ENCODE measurements at regions of chr17 and their contacts with region 1.

Region 1: DNA sequence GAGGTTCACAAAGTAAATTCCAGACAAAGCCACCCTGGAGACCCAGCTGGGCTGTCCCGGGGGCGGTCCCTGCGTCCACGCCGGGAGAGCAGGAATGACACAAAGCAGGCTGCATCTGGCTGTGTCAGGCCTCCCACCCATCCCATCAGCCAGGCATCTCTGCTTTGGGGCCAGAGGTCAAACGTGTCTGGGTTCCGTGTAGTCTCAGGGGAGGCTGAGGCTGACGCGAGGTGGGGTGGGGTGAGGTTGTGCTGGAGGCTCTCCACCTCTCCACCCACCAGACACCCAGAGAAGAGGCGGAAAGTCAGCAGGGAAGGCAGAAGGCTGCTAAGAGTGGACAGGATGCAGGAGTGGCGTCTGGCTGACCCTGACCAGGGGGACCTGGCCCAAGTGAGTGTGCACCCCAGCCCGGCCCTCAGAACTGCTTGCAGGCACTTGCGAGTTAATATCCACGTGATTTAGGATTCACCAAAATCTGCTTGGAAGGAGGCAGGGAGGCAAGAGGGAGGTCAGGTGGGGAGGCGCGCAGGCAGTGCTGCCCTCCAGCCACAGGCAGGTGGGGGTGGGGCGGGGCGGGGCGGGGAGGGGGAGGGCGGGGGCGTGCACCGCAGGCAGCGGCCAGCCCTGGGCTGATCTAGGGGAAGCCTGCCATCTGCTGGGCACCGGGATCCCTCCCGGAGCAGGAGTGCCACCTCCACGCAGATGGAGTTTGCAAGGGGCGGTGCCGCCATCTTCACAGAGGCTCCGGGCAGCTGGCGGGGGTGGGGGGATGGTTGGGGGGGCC is 44.3 kb downstream of the TBC1D16 start:
- DNase-seq: peak; percentile 75
- H3K4me3 Mint-ChIP-seq: no peak overlapping the region
- H3K27ac Mint-ChIP-seq: no peak overlapping the region
- H3K4me1 Mint-ChIP-seq: peaks cover 35% of the 10 kb centered on the region
- H3K27me3 Mint-ChIP-seq: no peaks in the 10 kb centered on the region
- CTCF ChIP-seq: peak; percentile 73

Region 2: DNA sequence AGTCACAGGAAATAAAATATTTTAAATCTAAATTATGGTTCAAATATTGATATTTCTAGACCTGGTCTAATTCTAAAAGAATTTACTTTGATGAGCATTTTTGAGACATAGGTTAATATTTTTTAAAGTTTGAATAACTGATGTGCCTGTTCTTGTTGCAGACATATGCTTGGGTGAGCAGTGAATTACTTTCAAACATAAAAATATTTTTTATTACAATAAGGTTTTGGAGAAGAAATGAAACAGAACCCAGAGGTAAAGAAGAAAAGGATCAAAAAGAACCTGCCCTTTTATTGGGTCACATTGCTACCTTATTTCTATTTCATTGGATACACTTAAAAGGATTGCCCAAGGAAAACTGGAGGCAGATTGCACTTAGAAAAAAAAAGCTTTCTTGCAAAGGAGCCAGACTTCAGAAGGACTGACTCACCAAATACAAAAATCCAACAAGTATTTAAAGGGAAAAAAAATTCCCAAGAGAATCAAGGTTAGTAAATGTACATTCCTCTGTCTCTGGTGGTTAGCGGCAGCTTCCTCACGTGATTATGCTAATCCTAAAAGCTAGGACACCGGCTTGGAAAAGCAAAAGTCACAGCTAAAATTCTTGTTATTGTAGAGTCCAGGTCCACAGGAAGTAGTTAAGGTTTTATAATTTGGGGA is 242.0 kb before region 1 on chr17:
- CTCF ChIA-PET with region 1: interaction called, 8 read pairs
- POLR2A ChIA-PET with region 1: interaction called, 7 read pairs
- intact Hi-C with region 1: loop called (anchors 1 kb)
- DNase-seq: peak; percentile 57
- H3K4me3 Mint-ChIP-seq: no peak overlapping the region
- H3K27ac Mint-ChIP-seq: no peak overlapping the region
- H3K4me1 Mint-ChIP-seq: no peaks in the 10 kb centered on the region
- H3K27me3 Mint-ChIP-seq: no peaks in the 10 kb centered on the region
- CTCF ChIP-seq: no peak

Region 3: GRCh38 chr17:79810130-79811010 is 181.0 kb before region 1 on chr17:
- CTCF ChIA-PET with region 1: interaction called, 19 read pairs
- POLR2A ChIA-PET with region 1: interaction called, 5 read pairs
- intact Hi-C with region 1: loop called (anchors 1 kb)
- DNase-seq: peak; percentile 84
- H3K4me3 Mint-ChIP-seq: peak overlapping the region; percentile 33
- H3K27ac Mint-ChIP-seq: no peak overlapping the region
- H3K4me1 Mint-ChIP-seq: peaks cover 12% of the 10 kb centered on the region
- H3K27me3 Mint-ChIP-seq: peaks cover 46% of the 10 kb centered on the region
- CTCF ChIP-seq: no peak

Region 4: DNA sequence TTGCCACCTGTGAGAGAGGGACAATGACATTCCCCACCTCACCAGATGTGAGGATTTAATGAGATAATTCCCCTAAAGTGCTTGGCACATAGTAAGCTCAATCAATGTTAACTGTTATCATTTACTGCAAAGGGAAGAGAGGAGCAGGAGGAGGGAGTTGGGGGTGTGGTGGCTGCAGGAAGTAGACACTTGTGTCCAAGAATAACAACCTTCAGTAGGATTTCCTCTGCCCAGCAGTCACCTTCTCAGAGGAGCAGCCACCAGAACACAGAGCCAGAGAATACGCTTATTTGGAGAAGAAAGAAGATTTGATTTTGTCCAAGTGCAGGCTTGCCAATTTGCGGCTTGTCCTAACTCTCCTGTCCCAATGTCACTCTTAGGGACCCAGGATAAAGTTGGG is 162.3 kb before region 1 on chr17:
- CTCF ChIA-PET with region 1: no interaction called
- POLR2A ChIA-PET with region 1: no interaction called
- intact Hi-C with region 1: no loop called
- DNase-seq: no peak
- H3K4me3 Mint-ChIP-seq: no peak overlapping the region
- H3K27ac Mint-ChIP-seq: no peak overlapping the region
- H3K4me1 Mint-ChIP-seq: peaks cover 15% of the 10 kb centered on the region
- H3K27me3 Mint-ChIP-seq: no peaks in the 10 kb centered on the region
- CTCF ChIP-seq: no peak

Region 5: GRCh38 chr17:79915850-79916430 is 75.4 kb before region 1 on chr17:
- CTCF ChIA-PET with region 1: interaction called, 11 read pairs
- POLR2A ChIA-PET with region 1: interaction called, 8 read pairs
- intact Hi-C with region 1: loop called (anchors 1 kb)
- DNase-seq: peak; percentile 83
- H3K4me3 Mint-ChIP-seq: no peak overlapping the region
- H3K27ac Mint-ChIP-seq: no peak overlapping the region
- H3K4me1 Mint-ChIP-seq: peaks cover 19% of the 10 kb centered on the region
- H3K27me3 Mint-ChIP-seq: no peaks in the 10 kb centered on the region
- CTCF ChIP-seq: peak; percentile 63

Region 6: DNA sequence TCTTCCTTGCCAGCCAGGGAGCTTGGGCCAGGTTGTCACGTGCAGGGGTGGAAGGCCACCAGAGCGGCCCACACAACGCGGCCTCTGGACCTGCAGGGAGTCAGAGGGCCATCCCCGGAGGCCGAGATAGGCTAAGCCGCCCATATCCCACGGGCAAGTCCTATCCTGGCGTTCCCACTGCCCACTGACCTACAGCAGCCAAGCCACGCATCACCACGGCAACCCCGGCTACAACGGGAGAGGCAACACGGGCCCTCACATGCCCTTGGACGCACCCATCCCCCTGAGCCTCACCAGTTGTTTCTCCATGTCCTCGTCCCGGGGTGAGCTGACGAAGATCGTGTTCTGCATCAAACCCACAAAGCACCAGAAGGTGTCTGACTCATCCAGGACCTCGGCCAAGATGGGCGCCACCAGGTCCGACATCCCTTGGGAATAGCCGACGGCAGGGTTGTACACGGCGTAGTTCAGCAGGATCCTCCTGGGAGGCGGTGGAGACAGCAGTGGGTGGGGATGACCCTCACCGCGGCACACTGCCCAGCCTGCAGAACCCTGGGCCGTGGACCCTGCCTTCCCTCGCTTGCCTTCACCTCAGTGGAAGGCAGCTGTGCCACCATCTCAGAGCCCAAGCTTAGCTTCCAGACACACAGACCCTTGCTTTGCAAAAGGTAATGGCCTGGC is 43.8 kb before region 1 on chr17:
- CTCF ChIA-PET with region 1: interaction called, 5 read pairs
- POLR2A ChIA-PET with region 1: interaction called, 16 read pairs
- intact Hi-C with region 1: loop called (anchors 5 kb)
- DNase-seq: peak; percentile 99
- H3K4me3 Mint-ChIP-seq: peak overlapping the region; percentile 17
- H3K27ac Mint-ChIP-seq: peak overlapping the region; percentile 85
- H3K4me1 Mint-ChIP-seq: peaks cover 22% of the 10 kb centered on the region
- H3K27me3 Mint-ChIP-seq: no peaks in the 10 kb centered on the region
- CTCF ChIP-seq: no peak